WTC11 (cell line): ENCODE measurements at regions of chr15 and their contacts with region 1.

Region 1: DNA sequence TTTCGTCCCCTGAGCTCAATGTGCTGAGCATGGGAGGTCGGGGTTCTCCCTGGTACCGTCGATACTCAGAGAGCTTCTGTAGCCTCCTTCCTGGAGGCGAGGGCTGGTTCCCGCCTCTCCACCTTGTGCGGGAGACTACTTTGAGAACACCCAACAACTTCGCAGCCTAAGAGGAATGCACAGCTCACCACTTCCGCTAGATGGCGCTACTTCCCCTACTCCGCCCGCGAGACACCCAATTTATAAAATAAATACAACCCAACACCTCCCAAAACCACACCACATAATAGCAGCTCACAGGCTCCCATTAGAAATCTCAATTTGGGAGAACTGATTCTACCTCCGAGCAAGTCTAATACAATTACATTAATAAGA is 1.2 kb downstream of the RGMA start:
- DNase-seq: peak; percentile 85
- ATAC-seq: peak; percentile 67
- H3K4me3 Mint-ChIP-seq: peak overlapping the region; percentile 82
- H3K27ac Mint-ChIP-seq: no peak overlapping the region
- H3K4me1 Mint-ChIP-seq: peaks cover 35% of the 10 kb centered on the region
- H3K27me3 Mint-ChIP-seq: peaks cover 17% of the 10 kb centered on the region
- CTCF ChIP-seq: peak; percentile 88

Region 2: DNA sequence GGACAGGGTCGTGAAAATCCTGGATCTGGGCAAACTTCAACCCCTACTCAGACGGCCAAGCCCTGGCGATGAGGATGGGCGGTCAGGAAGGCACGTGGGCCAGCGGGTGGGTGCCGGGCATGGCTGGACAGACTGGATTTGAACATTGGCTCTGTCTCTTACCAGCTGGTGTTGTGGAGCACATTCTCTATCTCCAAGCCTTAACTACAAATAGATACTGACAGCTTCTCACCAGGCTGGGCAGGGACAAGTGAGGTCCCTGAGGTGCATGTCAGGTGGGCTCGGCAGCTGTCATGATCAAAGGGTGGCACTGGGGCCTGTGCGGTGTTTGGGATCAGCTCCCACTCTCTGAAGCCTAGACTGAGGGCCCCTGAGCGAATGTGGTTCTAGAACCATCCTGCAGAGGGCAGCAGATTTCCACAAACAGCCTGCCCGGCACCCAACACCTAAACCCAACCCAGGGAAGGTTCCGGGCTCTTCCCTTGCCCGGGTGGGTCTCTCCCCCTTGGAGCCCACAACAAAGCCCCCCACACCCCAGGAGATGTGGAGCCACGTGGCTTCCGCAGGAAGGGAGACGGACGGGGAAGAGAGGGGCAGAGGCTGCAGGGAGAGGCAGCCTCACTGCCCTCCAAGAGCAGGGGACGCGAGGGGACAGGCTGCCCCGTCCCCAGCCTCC is 57.2 kb before region 1 on chr15:
- CTCF ChIA-PET with region 1: interaction called, 30 read pairs
- POLR2A ChIA-PET with region 1: no interaction called
- DNase-seq: peak; percentile 84
- ATAC-seq: peak; percentile 84
- H3K4me3 Mint-ChIP-seq: no peak overlapping the region
- H3K27ac Mint-ChIP-seq: no peak overlapping the region
- H3K4me1 Mint-ChIP-seq: peaks cover 28% of the 10 kb centered on the region
- H3K27me3 Mint-ChIP-seq: no peaks in the 10 kb centered on the region
- CTCF ChIP-seq: peak; percentile 90

Region 3: GRCh38 chr15:93060336-93061263 is 27.2 kb before region 1 on chr15:
- CTCF ChIA-PET with region 1: interaction called, 17 read pairs
- POLR2A ChIA-PET with region 1: no interaction called
- DNase-seq: no peak
- ATAC-seq: no peak
- H3K4me3 Mint-ChIP-seq: peak overlapping the region; percentile 29; the same call in 1 of the 2 replicates
- H3K27ac Mint-ChIP-seq: peak overlapping the region; percentile 89
- H3K4me1 Mint-ChIP-seq: peaks cover 87% of the 10 kb centered on the region
- H3K27me3 Mint-ChIP-seq: no peaks in the 10 kb centered on the region
- CTCF ChIP-seq: no peak

Region 4: DNA sequence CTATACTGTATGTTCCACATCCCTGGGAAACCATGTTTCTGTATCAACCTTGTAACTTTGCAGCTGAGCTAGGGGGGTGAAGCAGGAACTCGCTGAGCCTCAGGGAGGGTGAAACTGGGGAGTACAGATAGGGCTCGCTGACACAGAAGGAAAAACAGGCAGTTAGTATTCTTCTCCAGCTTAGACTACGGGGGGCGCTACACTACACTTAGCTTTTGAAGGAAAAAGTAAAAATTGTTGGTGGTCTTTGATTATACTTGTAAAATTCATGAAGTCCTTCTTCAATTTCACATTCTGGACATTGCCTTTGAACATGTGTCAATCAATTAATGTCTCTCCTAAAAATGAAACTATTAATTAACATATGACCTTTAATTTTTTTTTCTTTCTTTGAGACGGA is 74.7 kb after region 1 on chr15:
- CTCF ChIA-PET with region 1: interaction called, 11 read pairs
- POLR2A ChIA-PET with region 1: no interaction called
- DNase-seq: no peak
- ATAC-seq: no peak
- H3K4me3 Mint-ChIP-seq: no peak overlapping the region
- H3K27ac Mint-ChIP-seq: no peak overlapping the region
- H3K4me1 Mint-ChIP-seq: 0 out of 2 replicates have a peak, but pooled peaks cover 3% of the 10 kb centered on the region
- H3K27me3 Mint-ChIP-seq: no peaks in the 10 kb centered on the region; the same call in none of the 2 replicates
- CTCF ChIP-seq: no peak

Region 5: DNA sequence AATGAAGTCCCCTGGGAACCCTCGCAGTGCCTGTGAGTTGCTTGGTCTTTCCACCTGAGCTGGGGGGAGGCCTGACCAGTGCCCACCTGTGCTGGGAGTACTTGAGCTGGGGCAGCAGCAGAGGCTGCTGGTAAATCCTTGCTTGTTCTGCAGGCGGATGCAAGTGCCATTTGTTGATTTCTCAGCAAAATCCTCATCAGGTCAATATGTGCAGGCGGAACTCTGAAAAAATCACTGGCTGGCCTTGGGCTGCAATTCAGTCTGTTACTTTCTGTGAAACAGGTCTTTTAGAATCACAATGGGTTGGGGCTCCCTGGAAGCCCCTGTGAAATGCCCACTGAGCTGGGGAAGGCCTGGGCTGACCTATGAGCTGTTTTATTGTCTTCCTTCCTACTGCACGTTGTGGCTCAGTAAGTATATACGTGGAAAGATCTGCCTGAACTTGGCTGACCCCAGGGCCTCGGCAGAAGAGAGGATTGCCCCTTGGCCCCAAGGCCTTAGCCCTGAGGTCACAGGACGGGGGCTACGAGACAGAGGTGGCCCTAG is 183.2 kb after region 1 on chr15:
- CTCF ChIA-PET with region 1: interaction called, 10 read pairs
- POLR2A ChIA-PET with region 1: no interaction called
- DNase-seq: no peak
- ATAC-seq: peak; percentile 55
- H3K4me3 Mint-ChIP-seq: no peak overlapping the region
- H3K27ac Mint-ChIP-seq: no peak overlapping the region; the same call in 1 of the 2 replicates
- H3K4me1 Mint-ChIP-seq: peaks cover 44% of the 10 kb centered on the region
- H3K27me3 Mint-ChIP-seq: no peaks in the 10 kb centered on the region; the same call in 1 of the 2 replicates
- CTCF ChIP-seq: no peak

Region 6: DNA sequence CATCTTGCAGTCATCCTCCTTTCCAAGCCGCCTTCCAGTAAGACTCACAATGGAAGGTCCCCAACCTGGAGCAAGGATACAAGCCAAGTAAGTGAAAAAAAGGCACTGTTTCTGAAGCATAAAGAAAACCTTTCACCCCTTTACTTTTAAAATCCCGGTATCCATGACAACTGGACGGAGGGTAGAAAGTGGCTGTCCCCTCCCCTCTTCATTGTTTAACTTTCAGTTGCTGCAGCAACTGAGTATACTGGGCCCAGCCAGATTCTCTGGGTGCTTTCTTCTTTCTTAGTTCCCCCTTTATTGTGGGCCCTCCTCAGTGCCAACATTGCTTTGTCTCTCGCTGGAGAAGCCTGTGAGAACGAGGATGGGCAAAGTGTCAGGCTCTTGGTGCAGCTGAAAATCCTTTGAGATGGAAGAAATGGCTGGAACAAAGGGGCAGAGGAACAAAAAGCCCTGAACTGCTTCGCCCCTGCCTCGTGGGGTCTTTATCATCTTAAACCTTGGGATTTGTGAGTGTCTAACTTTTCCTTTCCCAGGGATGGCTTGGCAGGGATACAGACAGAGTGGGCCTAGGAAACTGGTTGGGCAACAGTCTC is 225.2 kb after region 1 on chr15:
- CTCF ChIA-PET with region 1: interaction called, 11 read pairs
- POLR2A ChIA-PET with region 1: no interaction called
- DNase-seq: no peak
- ATAC-seq: peak; percentile 53
- H3K4me3 Mint-ChIP-seq: no peak overlapping the region
- H3K27ac Mint-ChIP-seq: no peak overlapping the region
- H3K4me1 Mint-ChIP-seq: peaks cover 13% of the 10 kb centered on the region
- H3K27me3 Mint-ChIP-seq: peaks cover 16% of the 10 kb centered on the region
- CTCF ChIP-seq: no peak